ENCODE measurements at regions of chrX and their contacts with region 1.

Region 1: DNA sequence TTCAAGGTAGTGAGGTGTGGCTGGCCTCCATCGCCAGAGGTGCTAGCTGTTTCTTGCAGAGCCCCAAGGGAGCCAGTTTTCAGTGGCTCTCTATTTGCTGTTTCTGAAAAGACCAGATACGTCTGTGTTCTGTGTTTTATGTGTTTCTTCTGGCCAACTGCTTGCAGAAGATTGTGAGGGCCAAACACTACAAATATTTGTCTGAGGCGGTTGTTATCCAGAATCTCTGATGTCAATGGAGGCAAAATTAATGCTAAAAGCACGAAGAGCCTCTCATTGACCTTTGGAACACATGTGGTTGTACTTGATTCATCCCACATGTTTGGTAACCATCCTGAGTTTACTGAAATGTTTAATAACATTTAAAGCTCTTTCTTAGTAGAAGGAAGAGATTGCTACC is 113.9 kb downstream of the CT47B1 start:
- DNase-seq: peak in 4 of 5 donors; percentile 16 to 35 (median 22)
- ATAC-seq: peak in 3 of 4 donors; percentile 57 to 88 (median 70)
- H3K4me3 ChIP-seq: no peak overlapping the region
- H3K27ac ChIP-seq: peak overlapping the region in 5 of 12 donors; percentile 9 to 75 (median 47)
- H3K4me1 ChIP-seq: no peaks in the 10 kb centered on the region
- H3K27me3 ChIP-seq: no peaks in the 10 kb centered on the region
- CTCF ChIP-seq: no peak
- POLR2A ChIP-seq: no peak

Region 2: DNA sequence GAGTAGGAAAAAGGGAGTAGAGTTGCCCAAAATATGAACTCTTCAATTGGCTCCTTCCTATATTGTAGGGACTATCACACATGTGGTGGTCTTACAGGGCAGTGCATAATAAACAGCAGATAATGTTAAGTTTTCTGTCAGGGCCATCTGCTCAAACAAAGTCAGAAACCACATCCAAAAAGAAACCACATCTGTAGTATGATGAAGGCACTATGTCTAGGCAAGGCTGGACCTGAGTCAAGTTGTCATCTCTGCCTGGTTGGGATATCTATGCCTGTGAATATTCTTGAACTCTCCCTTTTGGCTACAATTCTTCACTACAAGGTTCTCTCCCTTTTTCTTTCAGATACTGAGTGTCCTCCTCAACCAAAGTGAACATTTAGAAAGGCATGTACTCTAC is 22.5 kb before region 1 on chrX:
- intact Hi-C with region 1: loop called in 1 of 10 experiments (anchors 2 kb)
- DNase-seq: no peak
- ATAC-seq: no peak
- H3K4me3 ChIP-seq: no peak overlapping the region
- H3K27ac ChIP-seq: no peak overlapping the region
- H3K4me1 ChIP-seq: no peaks in the 10 kb centered on the region
- H3K27me3 ChIP-seq: peaks cover 0 to 4% (median 0%) of the 10 kb centered on the region in 9 donors
- CTCF ChIP-seq: no peak
- POLR2A ChIP-seq: no peak

Measured in heart left ventricle (tissue), 16 donors.